ENCODE measurements at regions of chr9 and their contacts with region 1.

Region 1: DNA sequence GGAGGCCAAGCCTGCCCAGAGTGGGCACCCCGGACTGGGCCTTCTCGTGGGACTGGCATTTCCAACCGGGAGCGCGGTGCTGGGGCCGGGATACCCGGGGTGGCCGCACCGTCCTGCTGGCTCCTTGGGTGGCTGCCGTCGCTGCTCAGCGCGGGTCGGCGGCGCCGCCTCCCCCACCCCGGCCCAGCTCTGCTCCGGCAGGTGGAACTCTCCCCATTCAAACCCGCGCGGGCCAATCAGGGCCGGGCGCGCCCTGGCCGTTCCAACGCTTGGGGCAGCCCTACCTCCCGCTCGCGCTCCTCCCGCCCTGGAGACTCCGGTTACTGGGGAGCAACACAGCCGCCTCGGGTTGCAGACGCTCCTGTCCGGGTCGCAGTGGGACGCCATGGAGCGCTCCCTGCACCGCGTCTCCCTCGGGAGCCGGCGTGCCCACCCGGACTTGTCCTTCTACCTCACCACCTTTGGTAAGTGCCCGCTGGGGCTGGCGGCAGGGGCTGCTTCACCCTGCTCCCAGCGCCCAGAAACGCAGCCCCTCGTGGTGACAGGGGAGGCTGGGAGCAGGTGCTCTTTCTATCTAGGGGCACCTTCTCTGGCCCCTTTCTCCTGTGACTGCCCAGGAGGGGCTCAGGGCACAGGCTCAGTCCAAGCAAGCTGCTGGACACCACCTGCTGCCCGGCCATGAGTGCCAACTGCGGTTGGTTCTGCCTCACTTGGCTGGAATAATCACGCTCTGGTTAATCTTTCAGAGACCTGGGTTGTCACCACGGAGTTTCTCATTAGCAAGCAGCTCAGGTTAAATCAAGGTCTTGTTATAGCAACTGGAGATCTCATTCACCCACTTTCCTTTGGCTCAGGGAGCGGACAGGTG is at the start of gene RGS3:
- DNase-seq: peak; percentile 72
- ATAC-seq: peak; percentile 92 to 97
- total RNA-seq, gene RGS3: 124 to 131 TPM

Region 2: DNA sequence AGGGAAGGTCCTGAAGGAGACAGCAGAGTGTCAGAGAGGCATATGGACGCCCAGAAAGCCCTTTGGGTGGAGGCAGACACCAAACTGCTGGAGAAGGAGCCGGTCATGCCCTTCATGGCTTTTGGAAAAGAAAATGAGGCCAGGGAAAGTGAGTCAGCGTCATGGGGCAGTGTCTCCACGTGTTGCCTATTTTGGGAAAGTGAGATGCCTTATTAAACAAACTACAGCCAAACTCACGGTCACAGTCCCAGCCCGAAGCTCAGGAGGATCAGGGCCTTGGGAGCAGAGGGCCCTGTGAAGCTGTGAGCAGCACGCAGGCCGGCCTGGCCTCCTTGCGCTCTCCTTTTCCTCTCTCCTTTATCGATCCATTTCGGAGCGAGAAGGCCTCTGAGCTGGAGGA is 24.8 kb after region 1 on chr9:
- intact Hi-C with region 1: no loop called
- DNase-seq: no peak
- ATAC-seq: peak; percentile 57 to 58

Region 3: GRCh38 chr9:113501129-113501686 is 37.6 kb after region 1 on chr9:
- intact Hi-C with region 1: loop called in 1 of 2 experiments (anchors 5 kb)
- DNase-seq: peak; percentile 77
- ATAC-seq: peak; percentile 71 to 79

Measured in left cardiac atrium (tissue), 4 donors.